Aorta (tissue), 5 donors: ENCODE measurements at regions of chr7 and their contacts with region 1.

Region 1: GRCh38 chr7:16564909-16565426 is 38.3 kb downstream of the LRRC72 start:
- DNase-seq: no peak
- ATAC-seq: no peak
- H3K4me3 ChIP-seq: no peak overlapping the region
- H3K27ac ChIP-seq: no peak overlapping the region
- H3K4me1 ChIP-seq: no peaks in the 10 kb centered on the region
- H3K27me3 ChIP-seq: no peaks in the 10 kb centered on the region

Region 2: GRCh38 chr7:16071246-16071857 is 493.6 kb before region 1 on chr7:
- intact Hi-C with region 1: loop called (anchors 2 to 5 kb)
- DNase-seq: no peak
- ATAC-seq: peak; percentile 73
- H3K4me3 ChIP-seq: no peak overlapping the region
- H3K27ac ChIP-seq: no peak overlapping the region
- H3K4me1 ChIP-seq: no peaks in the 10 kb centered on the region
- H3K27me3 ChIP-seq: no peaks in the 10 kb centered on the region

Region 3: GRCh38 chr7:16078076-16078952 is 486.7 kb before region 1 on chr7:
- intact Hi-C with region 1: loop called (anchors 2 to 5 kb)
- DNase-seq: no peak
- ATAC-seq: no peak
- H3K4me3 ChIP-seq: no peak overlapping the region
- H3K27ac ChIP-seq: no peak overlapping the region
- H3K4me1 ChIP-seq: no peaks in the 10 kb centered on the region
- H3K27me3 ChIP-seq: no peaks in the 10 kb centered on the region

Region 4: GRCh38 chr7:16416289-16417282 is 148.4 kb before region 1 on chr7:
- intact Hi-C with region 1: loop called in 1 of 2 experiments (anchors 10 kb)
- DNase-seq: no peak
- ATAC-seq: no peak
- H3K4me3 ChIP-seq: no peak overlapping the region
- H3K27ac ChIP-seq: no peak overlapping the region
- H3K4me1 ChIP-seq: no peaks in the 10 kb centered on the region
- H3K27me3 ChIP-seq: no peaks in the 10 kb centered on the region

Region 5: DNA sequence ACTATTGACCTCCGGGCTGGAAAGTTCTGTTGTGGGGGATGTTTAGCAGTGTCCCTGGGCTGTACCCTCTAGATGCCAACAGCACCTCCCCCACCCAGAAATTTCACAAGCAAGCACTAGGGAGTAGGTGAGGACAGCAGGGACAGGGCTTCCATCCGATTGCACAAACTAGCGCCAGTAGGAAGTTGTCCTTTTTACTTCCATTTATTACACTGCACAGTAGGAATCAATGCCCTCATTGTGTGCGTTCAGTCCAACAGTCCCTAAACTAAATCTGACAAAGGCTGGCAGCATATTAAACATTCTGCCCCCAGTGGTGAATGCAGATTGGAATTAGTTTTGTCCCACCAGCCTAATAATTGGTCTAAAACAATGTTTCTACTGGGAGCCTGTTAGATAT is 93.0 kb before region 1 on chr7:
- intact Hi-C with region 1: no loop called
- DNase-seq: no peak
- ATAC-seq: no peak
- H3K4me3 ChIP-seq: no peak overlapping the region
- H3K27ac ChIP-seq: no peak overlapping the region
- H3K4me1 ChIP-seq: no peaks in the 10 kb centered on the region
- H3K27me3 ChIP-seq: no peaks in the 10 kb centered on the region